HAP-1 (cell line): ENCODE measurements at regions of chr11 and their contacts with region 1.

Region 1: GRCh38 chr11:125887373-125888324 is at the start of gene HYLS1:
- DNase-seq: peak; percentile 84 to 91
- H3K4me3 ChIP-seq: peak within 1 kb of the TSS; percentile 53
- H3K4me1 ChIP-seq: peaks cover 7% of the 10 kb centered on the region
- H3K27me3 ChIP-seq: no peaks in the 10 kb centered on the region

Region 2: GRCh38 chr11:124673333-124674167 is 1214.1 kb before region 1 on chr11 and contains the starts of genes SIAE and SPA17:
- in situ Hi-C with region 1: no loop called
- DNase-seq: peak; percentile 92 to 97
- H3K4me3 ChIP-seq: peak within 1 kb of the TSS; percentile 79
- H3K4me1 ChIP-seq: peaks cover 11% of the 10 kb centered on the region
- H3K27me3 ChIP-seq: no peaks in the 10 kb centered on the region

Region 3: DNA sequence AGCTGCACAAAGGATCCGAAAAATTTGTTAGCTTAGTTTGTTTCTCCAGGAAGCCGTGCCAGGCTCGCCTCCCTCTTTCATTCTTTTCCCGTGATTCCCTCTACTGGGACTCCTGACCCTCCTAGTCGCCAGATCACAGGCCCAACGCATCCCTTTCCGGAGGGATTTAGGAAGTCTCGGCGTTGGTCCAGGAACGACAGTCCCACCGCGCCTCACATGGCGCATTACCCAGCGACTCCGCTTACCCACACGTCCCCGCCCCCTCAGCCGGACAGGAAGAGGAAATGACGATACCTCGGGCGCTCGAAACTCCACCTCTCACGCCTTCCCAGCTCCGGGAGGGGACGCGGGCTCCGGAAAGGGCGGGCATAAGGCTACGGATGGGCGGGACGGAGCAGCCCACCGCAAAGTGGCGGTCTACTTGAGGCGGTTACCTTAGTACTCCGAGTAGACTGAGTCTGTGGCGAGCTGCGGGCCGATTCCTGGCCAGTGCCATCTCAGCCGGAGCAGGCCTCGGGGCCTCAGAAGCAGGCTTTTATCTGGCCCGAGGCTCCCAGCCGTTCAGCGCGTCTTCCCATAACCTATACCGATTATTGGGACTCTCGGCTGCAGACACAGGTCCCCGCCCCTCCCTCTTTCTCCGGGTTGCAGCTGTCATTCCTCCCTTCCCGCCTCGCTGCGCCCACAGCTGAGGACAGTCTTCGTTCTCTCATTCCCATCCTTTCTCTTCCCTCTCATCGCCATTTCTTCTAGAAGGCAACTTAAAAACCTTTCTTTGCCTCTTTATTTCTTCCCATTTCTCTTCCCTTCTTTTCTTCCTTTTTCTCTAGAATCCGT is 933.7 kb before region 1 on chr11 and contains the start of gene CCDC15:
- in situ Hi-C with region 1: loop called (anchors 25 kb)
- DNase-seq: peak; percentile 98 to 99
- H3K4me3 ChIP-seq: peak within 1 kb of the TSS; percentile 62
- H3K4me1 ChIP-seq: peaks cover 9% of the 10 kb centered on the region
- H3K27me3 ChIP-seq: no peaks in the 10 kb centered on the region; the same call in 1 of the 2 replicates

Region 4: GRCh38 chr11:125102510-125102909 is 785.1 kb before region 1 on chr11:
- in situ Hi-C with region 1: no loop called
- DNase-seq: no peak
- H3K4me3 ChIP-seq: no peak overlapping the region
- H3K4me1 ChIP-seq: peaks cover 13% of the 10 kb centered on the region
- H3K27me3 ChIP-seq: no peaks in the 10 kb centered on the region